H1 (cell line): ENCODE measurements at regions of chr4 and their contacts with region 1.

Region 1: GRCh38 chr4:113394730-113395530 is 345.5 kb downstream of the ANK2 start:
- DNase-seq: peak in 1 of 2 experiments; percentile 51
- H3K4me3 ChIP-seq: no peak overlapping the region
- H3K27ac ChIP-seq: no peak overlapping the region
- H3K4me1 ChIP-seq: no peaks in the 10 kb centered on the region
- H3K27me3 ChIP-seq: no peaks in the 10 kb centered on the region
- CTCF ChIP-seq: peak in 2 of 3 experiments; percentile 79 to 83; a peak in 3 of 4 replicates
- EP300 ChIP-seq: no peak
- POLR2A ChIP-seq: no peak
- RAD21 ChIP-seq: peak; percentile 96 to 99

Region 2: DNA sequence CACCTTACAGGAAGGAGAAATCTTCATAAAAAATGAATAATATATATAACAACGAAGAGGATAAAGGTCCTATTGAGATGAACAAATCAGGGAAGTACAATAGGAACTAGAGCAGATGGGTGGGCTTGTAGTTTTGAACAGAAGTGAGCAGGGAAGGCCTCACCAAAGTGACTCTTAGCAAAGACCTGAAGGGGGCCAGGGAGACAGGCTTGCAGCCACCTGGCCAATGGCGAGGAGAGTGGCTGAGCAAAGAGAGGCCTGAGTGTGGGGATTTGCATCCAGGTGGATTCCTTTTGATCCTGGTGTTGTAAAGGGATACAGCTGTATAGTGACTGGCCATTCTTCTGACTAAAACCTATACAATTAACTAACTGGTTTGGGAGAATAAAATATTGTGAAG is 12.5 kb after region 1 on chr4:
- CTCF ChIA-PET with region 1: interaction called, 16 read pairs
- POLR2A ChIA-PET with region 1: no interaction called
- DNase-seq: no peak
- H3K4me3 ChIP-seq: no peak overlapping the region
- H3K27ac ChIP-seq: no peak overlapping the region
- H3K4me1 ChIP-seq: peaks cover 0 to 4% (median 0%) of the 10 kb centered on the region in 4 experiments; a peak in 1 of 7 replicates
- H3K27me3 ChIP-seq: peaks cover 0 to 2% (median 0%) of the 10 kb centered on the region in 4 experiments; a peak in 1 of 7 replicates
- CTCF ChIP-seq: peak; percentile 18 to 39 (median 18); a peak in 3 of 4 replicates
- EP300 ChIP-seq: no peak
- POLR2A ChIP-seq: no peak
- RAD21 ChIP-seq: peak; percentile 30 to 48

Region 3: GRCh38 chr4:113452868-113453620 is 58.1 kb after region 1 on chr4:
- CTCF ChIA-PET with region 1: interaction called, 16 read pairs
- POLR2A ChIA-PET with region 1: no interaction called
- DNase-seq: peak in 1 of 2 experiments; percentile 53
- H3K4me3 ChIP-seq: peak overlapping the region in 1 of 4 experiments; percentile 44; a peak in 2 of 8 replicates
- H3K27ac ChIP-seq: peak overlapping the region; percentile 68
- H3K4me1 ChIP-seq: peaks cover 0 to 23% (median 7%) of the 10 kb centered on the region in 4 experiments; a peak in 4 of 7 replicates
- H3K27me3 ChIP-seq: no peaks in the 10 kb centered on the region
- CTCF ChIP-seq: no peak
- EP300 ChIP-seq: peak in 1 of 2 experiments; percentile 97; a peak in 2 of 3 replicates
- POLR2A ChIP-seq: peak in 1 of 2 experiments; percentile 26; a peak in 1 of 3 replicates
- RAD21 ChIP-seq: no peak

Region 4: DNA sequence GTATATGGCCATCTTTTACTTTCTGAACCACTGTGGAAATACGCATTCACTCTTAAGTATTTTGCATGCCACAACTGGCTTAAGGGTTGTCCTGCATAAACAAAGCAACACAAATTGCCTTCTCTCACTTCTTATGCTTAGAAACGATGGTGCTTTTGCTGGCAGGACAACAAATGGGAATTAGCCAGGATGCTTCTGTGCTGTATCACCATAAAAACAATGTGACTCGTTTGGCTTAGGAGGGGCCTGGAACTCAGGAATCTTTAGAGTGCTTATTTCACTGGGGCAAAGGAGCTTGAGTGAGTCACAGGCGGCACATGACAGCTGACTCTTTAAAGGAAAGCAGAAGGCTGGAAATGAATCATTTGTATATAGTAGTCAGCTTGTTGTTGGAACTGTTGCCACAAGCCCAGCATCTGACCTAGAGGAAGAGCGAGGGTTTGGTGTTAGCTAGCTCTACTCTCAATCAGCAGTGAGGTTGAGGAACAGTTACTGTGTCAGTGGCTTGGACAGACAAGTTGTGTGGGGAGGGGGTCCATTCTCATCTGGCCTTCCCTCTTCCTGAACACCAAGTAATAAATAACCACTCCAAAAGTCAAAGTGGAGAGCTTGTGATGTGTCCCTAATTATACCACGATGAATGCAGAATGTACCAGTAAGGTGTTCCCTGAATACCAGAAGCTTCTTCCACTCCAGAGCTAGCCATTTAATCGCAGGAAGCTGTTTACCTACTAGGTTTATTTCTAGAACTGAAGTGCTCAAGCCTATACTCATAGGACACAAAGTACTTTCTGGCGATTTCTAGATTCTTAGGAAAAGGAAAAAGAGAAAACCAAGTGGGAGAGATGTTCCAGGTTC is 73.5 kb after region 1 on chr4:
- CTCF ChIA-PET with region 1: interaction called, 10 read pairs
- POLR2A ChIA-PET with region 1: no interaction called
- DNase-seq: peak in 1 of 2 experiments; percentile 66
- H3K4me3 ChIP-seq: no peak overlapping the region
- H3K27ac ChIP-seq: no peak overlapping the region
- H3K4me1 ChIP-seq: peaks cover 0 to 12% (median 4%) of the 10 kb centered on the region in 4 experiments; a peak in 5 of 7 replicates
- H3K27me3 ChIP-seq: no peaks in the 10 kb centered on the region
- CTCF ChIP-seq: no peak
- EP300 ChIP-seq: no peak
- POLR2A ChIP-seq: no peak
- RAD21 ChIP-seq: no peak

Region 5: GRCh38 chr4:113547487-113548042 is 152.6 kb after region 1 on chr4:
- CTCF ChIA-PET with region 1: interaction called, 11 read pairs
- POLR2A ChIA-PET with region 1: no interaction called
- DNase-seq: peak; percentile 75 to 86
- H3K4me3 ChIP-seq: no peak overlapping the region
- H3K27ac ChIP-seq: no peak overlapping the region
- H3K4me1 ChIP-seq: no peaks in the 10 kb centered on the region
- H3K27me3 ChIP-seq: no peaks in the 10 kb centered on the region
- CTCF ChIP-seq: peak; percentile 87 to 100 (median 98)
- EP300 ChIP-seq: no peak
- POLR2A ChIP-seq: no peak
- RAD21 ChIP-seq: peak; percentile 86 to 95

Region 6: GRCh38 chr4:113607998-113608397 is 213.1 kb after region 1 on chr4:
- CTCF ChIA-PET with region 1: no interaction called
- POLR2A ChIA-PET with region 1: no interaction called
- DNase-seq: no peak
- H3K4me3 ChIP-seq: no peak overlapping the region
- H3K27ac ChIP-seq: no peak overlapping the region
- H3K4me1 ChIP-seq: no peaks in the 10 kb centered on the region
- H3K27me3 ChIP-seq: no peaks in the 10 kb centered on the region
- CTCF ChIP-seq: no peak
- EP300 ChIP-seq: no peak
- POLR2A ChIP-seq: no peak
- RAD21 ChIP-seq: no peak